ENCODE measurements at regions of chr19 and their contacts with region 1.

Region 1: DNA sequence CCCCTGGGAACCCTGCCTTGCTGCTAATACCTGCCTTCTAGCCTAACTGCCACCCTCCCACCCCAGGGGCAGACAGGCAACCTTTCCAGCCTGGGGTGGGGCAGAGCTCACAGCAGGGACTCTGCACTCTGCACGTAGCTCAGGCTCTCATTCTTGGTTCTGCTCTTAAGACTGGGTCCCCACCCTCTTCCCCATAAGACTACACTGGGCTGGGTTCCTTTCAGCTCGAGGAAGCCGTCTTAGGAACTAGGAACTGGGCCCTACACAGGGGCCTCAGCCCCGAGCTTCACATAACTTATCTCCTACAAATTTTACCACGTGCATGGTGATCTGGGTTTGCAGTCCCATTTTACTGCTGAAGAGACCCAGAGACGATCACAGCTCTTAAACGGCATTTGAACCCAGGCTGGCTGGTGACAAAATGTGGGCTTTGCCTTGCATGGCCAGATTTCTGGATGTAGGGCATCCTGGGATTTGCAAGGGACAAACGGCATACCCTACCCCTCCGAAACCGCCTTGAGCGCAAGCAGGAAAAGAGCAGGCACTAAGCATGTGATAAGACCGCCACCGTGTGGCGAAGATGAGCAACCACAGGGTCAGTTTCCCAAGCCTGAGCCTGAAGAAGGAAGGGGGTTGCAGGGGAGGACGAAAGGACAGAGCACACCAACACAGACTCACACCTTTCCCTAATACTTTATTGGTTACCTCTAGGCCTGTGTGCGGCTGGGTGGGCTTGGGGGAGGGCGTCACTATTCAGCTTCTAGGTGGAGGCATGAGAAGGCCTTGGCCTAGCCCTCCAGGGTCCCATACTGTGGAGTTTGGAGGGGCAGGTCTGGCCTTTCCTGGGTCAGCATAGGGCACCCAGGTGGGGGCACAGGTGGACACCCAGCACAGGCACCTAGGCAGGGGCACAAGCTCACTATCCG is 5.1 kb downstream of the JUNB start:
- DNase-seq: peak; percentile 51 to 93 (median 62)
- ATAC-seq: peak; percentile 61
- H3K4me3 ChIP-seq: no peak overlapping the region
- H3K27ac ChIP-seq: peak overlapping the region; percentile 48
- H3K4me1 ChIP-seq: peaks cover 26 to 64% of the 10 kb centered on the region in 2 experiments
- H3K27me3 ChIP-seq: no peaks in the 10 kb centered on the region
- CTCF ChIP-seq: peak; percentile 96 to 98 (median 97)
- EP300 ChIP-seq: no peak
- POLR2A ChIP-seq: 0 out of 2 replicates have a peak, but pooled peaks have one; percentile 30
- RAD21 ChIP-seq: peak; percentile 95 to 98

Region 2: GRCh38 chr19:12711187-12711586 is 85.2 kb before region 1 on chr19:
- CTCF ChIA-PET with region 1: no interaction called
- POLR2A ChIA-PET with region 1: interaction called, 3 read pairs
- in situ Hi-C with region 1: loop called (anchors 5 kb)
- intact Hi-C with region 1: no loop called
- DNase-seq: no peak
- ATAC-seq: no peak
- H3K4me3 ChIP-seq: no peak overlapping the region
- H3K27ac ChIP-seq: no peak overlapping the region
- H3K4me1 ChIP-seq: peaks cover 0 to 17% of the 10 kb centered on the region in 2 experiments; a peak in 1 of 5 replicates
- H3K27me3 ChIP-seq: no peaks in the 10 kb centered on the region
- CTCF ChIP-seq: no peak
- EP300 ChIP-seq: no peak
- POLR2A ChIP-seq: no peak
- RAD21 ChIP-seq: no peak

Region 3: GRCh38 chr19:12716861-12717260 is 79.5 kb before region 1 on chr19:
- CTCF ChIA-PET with region 1: interaction called, 11 read pairs
- POLR2A ChIA-PET with region 1: interaction called, 30 read pairs
- in situ Hi-C with region 1: loop called (anchors 5 kb)
- intact Hi-C with region 1: loop called (anchors 1 kb)
- DNase-seq: peak in 2 of 4 experiments; percentile 64 to 80
- ATAC-seq: peak; percentile 77
- H3K4me3 ChIP-seq: no peak overlapping the region
- H3K27ac ChIP-seq: no peak overlapping the region
- H3K4me1 ChIP-seq: peaks cover 8 to 42% of the 10 kb centered on the region in 2 experiments; a peak in 3 of 5 replicates
- H3K27me3 ChIP-seq: no peaks in the 10 kb centered on the region
- CTCF ChIP-seq: peak; percentile 63 to 69 (median 63)
- EP300 ChIP-seq: no peak
- POLR2A ChIP-seq: no peak
- RAD21 ChIP-seq: peak; percentile 60 to 70

Region 4: DNA sequence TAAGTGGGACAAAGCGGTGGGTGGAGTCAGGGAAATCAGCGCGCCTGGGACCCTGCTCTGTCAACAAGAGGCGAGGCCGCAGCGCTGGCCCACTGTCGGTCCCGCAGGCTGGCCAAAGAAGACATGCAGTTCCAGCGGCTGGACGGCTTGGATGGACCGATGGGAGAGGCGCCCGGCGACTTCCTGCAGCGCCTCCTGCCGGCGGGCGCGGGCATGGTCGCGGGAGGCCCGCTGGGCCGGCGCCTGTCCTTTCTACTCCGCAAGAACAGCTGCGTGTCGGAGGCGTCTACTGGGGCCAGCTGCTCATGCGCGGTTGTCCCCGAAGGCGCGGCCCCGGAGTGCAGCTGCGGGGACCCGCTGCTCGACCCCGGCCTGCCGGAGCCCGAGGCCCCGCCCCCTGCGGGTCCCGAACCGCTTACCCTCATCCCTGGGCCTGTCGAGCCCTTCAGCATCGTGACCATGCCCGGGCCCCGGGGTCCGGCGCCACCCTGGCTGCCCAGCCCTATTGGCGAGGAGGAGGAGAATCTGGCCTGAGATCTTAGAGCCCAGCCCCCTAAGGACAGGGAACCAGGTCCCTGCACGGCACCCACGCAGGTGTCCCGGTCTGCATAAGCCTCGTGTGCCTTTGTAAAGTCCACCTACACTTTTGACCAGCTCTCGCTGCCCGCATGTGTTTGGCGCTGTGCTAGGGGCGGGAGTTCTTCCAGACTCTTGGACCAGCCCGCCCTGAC is 38.7 kb before region 1 on chr19:
- CTCF ChIA-PET with region 1: interaction called, 5 read pairs
- POLR2A ChIA-PET with region 1: interaction called, 11 read pairs
- in situ Hi-C with region 1: no loop called
- intact Hi-C with region 1: loop called (anchors 1 kb)
- DNase-seq: peak; percentile 84 to 88 (median 84)
- ATAC-seq: peak; percentile 97
- H3K4me3 ChIP-seq: peak overlapping the region; percentile 38
- H3K27ac ChIP-seq: no peak overlapping the region
- H3K4me1 ChIP-seq: peaks cover 5 to 40% of the 10 kb centered on the region in 2 experiments; a peak in 3 of 5 replicates
- H3K27me3 ChIP-seq: peaks cover 2 to 11% of the 10 kb centered on the region in 2 experiments; a peak in 3 of 5 replicates
- CTCF ChIP-seq: peak; percentile 94 to 97 (median 96)
- EP300 ChIP-seq: peak; percentile 9; the same call in 1 of the 2 replicates
- POLR2A ChIP-seq: no peak
- RAD21 ChIP-seq: peak; percentile 67 to 79

Region 5: DNA sequence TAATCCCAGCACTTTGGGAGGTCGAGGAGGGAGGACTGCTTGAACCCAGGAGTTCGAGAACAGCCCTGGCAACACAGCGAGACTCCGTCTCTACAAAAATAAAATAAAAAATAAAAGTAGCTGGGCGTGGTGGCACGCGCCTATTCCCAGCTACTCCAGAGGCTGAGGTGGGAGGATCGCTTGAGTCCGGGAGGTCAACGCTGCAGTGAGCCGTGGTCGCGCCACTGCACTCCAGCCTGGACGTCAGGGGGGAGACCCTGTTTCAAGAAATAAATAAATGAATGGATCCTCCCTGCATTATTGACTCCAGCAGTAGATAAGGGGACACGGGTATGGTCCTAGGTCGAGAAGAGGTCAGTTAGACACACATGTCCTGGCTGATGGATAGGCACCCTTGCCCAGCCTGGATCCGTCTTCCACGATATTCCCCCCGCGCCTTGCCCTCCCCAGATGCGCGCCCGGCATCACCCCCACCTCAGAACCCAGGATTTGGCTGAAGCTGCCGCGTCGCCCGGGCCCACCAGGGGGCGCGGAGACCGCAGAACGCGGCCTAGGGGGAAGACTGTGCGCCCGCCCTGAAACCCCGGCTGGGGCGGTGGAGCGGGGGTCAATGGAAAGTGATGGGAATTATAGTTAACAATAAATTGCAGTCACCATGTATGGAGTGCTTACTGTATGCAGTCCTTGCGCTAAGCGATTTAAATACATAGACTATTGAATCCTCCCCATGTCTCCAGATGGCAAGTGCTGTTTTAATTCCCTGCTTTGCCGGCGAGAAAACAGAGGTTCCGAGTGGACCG is 19.0 kb before region 1 on chr19:
- CTCF ChIA-PET with region 1: interaction called, 30 read pairs
- POLR2A ChIA-PET with region 1: interaction called, 44 read pairs
- in situ Hi-C with region 1: no loop called
- intact Hi-C with region 1: loop called (anchors 1 kb)
- DNase-seq: peak; percentile 72 to 89 (median 78)
- ATAC-seq: peak; percentile 76
- H3K4me3 ChIP-seq: peak overlapping the region; percentile 37
- H3K27ac ChIP-seq: peak overlapping the region; percentile 68
- H3K4me1 ChIP-seq: peaks cover 23 to 56% of the 10 kb centered on the region in 2 experiments; a peak in 4 of 5 replicates
- H3K27me3 ChIP-seq: no peaks in the 10 kb centered on the region
- CTCF ChIP-seq: peak; percentile 90 to 96 (median 93)
- EP300 ChIP-seq: peak; percentile 15; the same call in 1 of the 2 replicates
- POLR2A ChIP-seq: no peak
- RAD21 ChIP-seq: peak; percentile 93 to 94

Region 6: GRCh38 chr19:12806239-12807081 is 10.1 kb after region 1 on chr19 and contains the start of gene RNASEH2A:
- CTCF ChIA-PET with region 1: interaction called, 4 read pairs
- POLR2A ChIA-PET with region 1: interaction called, 29 read pairs
- in situ Hi-C with region 1: no loop called
- intact Hi-C with region 1: no loop called
- DNase-seq: peak; percentile 88 to 95 (median 90)
- ATAC-seq: peak; percentile 95
- H3K4me3 ChIP-seq: peak within 1 kb of the TSS; percentile 80
- H3K27ac ChIP-seq: peak within 1 kb of the TSS; percentile 93
- H3K4me1 ChIP-seq: peaks cover 14 to 45% of the 10 kb centered on the region in 2 experiments; a peak in 4 of 5 replicates
- H3K27me3 ChIP-seq: no peaks in the 10 kb centered on the region
- CTCF ChIP-seq: 0 out of 6 replicates have a peak, but pooled peaks of 1 of the 3 experiments have one; percentile 15
- EP300 ChIP-seq: no peak
- POLR2A ChIP-seq: peak; percentile 86
- RAD21 ChIP-seq: no peak
- polyA plus RNA-seq, gene RNASEH2A: 22.3 to 34.6 TPM

Measured in K562 (cell line).